Common myeloid progenitor, CD34-positive (primary cell): ENCODE measurements at regions of chr6 and their contacts with region 1.

Region 1: DNA sequence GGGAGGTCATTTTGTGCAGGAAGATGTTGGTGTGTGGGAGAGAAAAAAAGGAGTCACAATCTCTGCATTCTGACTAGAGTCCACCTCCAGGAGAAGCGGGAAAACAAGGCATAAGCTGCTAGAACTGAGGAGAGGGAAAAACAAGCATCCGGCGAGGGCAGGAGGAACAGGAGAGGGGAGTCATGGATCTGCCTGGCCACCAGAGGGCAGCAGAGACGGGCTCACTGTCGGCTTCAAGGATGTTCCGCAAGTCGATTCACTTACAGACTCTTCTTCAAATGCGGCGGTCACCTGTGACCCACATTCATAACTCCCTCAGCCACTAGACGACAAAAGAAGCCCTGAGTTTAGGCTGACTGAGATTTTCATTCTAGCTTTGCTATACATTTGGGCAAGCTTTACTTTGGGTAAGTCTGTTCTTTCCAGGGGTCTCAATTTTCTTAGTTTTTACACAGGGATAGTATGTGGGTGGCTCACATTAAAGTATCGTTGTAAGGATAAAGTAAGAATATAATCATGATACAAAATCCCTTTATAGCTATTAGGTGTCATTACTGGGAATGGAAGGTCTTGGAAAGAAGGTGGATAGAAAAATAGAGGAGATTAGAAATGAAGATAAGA is 6.6 kb upstream of the BTNL2 start:
- DNase-seq: peak; percentile 84 to 90 (median 88)
- H3K4me3 ChIP-seq: no peak overlapping the region
- H3K27ac ChIP-seq: no peak overlapping the region
- H3K4me1 ChIP-seq: peaks cover 0 to 4% (median 3%) of the 10 kb centered on the region in 4 experiments
- H3K27me3 ChIP-seq: peaks cover 2 to 8% (median 5%) of the 10 kb centered on the region in 5 experiments

Region 2: GRCh38 chr6:31882344-31882743 is 531.2 kb before region 1 on chr6:
- CTCF ChIA-PET with region 1: no interaction called
- POLR2A ChIA-PET with region 1: no interaction called
- DNase-seq: no peak
- H3K4me3 ChIP-seq: no peak overlapping the region
- H3K27ac ChIP-seq: no peak overlapping the region
- H3K4me1 ChIP-seq: no peaks in the 10 kb centered on the region
- H3K27me3 ChIP-seq: no peaks in the 10 kb centered on the region

Region 3: GRCh38 chr6:32402812-32403211 is 10.7 kb before region 1 on chr6:
- CTCF ChIA-PET with region 1: interaction called, 33 read pairs
- POLR2A ChIA-PET with region 1: no interaction called
- DNase-seq: no peak
- H3K4me3 ChIP-seq: no peak overlapping the region
- H3K27ac ChIP-seq: no peak overlapping the region
- H3K4me1 ChIP-seq: no peaks in the 10 kb centered on the region
- H3K27me3 ChIP-seq: peaks cover 0 to 9% (median 2%) of the 10 kb centered on the region in 5 experiments

Region 4: DNA sequence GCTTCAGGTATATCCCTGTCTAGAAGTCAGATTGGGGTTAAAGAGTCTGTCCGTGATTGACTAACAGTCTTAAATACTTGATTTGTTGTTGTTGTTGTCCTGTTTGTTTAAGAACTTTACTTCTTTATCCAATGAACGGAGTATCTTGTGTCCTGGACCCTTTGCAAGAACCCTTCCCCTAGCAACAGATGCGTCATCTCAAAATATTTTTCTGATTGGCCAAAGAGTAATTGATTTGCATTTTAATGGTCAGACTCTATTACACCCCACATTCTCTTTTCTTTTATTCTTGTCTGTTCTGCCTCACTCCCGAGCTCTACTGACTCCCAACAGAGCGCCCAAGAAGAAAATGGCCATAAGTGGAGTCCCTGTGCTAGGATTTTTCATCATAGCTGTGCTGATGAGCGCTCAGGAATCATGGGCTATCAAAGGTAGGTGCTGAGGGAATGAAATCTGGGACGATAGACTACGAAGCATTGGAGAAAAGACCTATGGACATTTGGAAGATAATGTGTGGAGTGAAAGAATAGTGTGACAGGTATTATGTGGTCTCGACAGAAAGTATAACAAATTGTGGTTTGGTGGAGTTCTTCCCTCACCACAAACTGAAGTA is 26.2 kb after region 1 on chr6 and contains the start of gene HLA-DRA:
- CTCF ChIA-PET with region 1: interaction called, 11 read pairs
- POLR2A ChIA-PET with region 1: no interaction called
- DNase-seq: peak; percentile 90 to 94 (median 91)
- H3K4me3 ChIP-seq: peak within 1 kb of the TSS; percentile 70 to 100 (median 94)
- H3K27ac ChIP-seq: peak within 1 kb of the TSS; percentile 95 to 97
- H3K4me1 ChIP-seq: peaks cover 14 to 51% (median 26%) of the 10 kb centered on the region in 4 experiments
- H3K27me3 ChIP-seq: no peaks in the 10 kb centered on the region

Region 5: GRCh38 chr6:32501016-32501415 is 87.5 kb after region 1 on chr6:
- CTCF ChIA-PET with region 1: no interaction called
- POLR2A ChIA-PET with region 1: no interaction called
- DNase-seq: no peak
- H3K4me3 ChIP-seq: no peak overlapping the region
- H3K27ac ChIP-seq: no peak overlapping the region
- H3K4me1 ChIP-seq: no peaks in the 10 kb centered on the region
- H3K27me3 ChIP-seq: no peaks in the 10 kb centered on the region

Region 6: GRCh38 chr6:32785781-32786533 is 372.4 kb after region 1 on chr6:
- CTCF ChIA-PET with region 1: interaction called, 54 read pairs
- POLR2A ChIA-PET with region 1: no interaction called
- DNase-seq: peak; percentile 73 to 84 (median 80)
- H3K4me3 ChIP-seq: no peak overlapping the region
- H3K27ac ChIP-seq: no peak overlapping the region
- H3K4me1 ChIP-seq: peaks cover 0 to 4% (median 0%) of the 10 kb centered on the region in 4 experiments
- H3K27me3 ChIP-seq: no peaks in the 10 kb centered on the region

Region 7: GRCh38 chr6:32868257-32868788 is 454.8 kb after region 1 on chr6:
- CTCF ChIA-PET with region 1: interaction called, 13 read pairs
- POLR2A ChIA-PET with region 1: no interaction called
- DNase-seq: peak; percentile 85 to 93 (median 87)
- H3K4me3 ChIP-seq: no peak overlapping the region
- H3K27ac ChIP-seq: no peak overlapping the region
- H3K4me1 ChIP-seq: peaks cover 11 to 21% (median 13%) of the 10 kb centered on the region in 4 experiments
- H3K27me3 ChIP-seq: peaks cover 0 to 2% (median 0%) of the 10 kb centered on the region in 5 experiments